OCI-LY7 (cell line): ENCODE measurements at regions of chr1 and their contacts with region 1.

Region 1: GRCh38 chr1:102434421-102434820 is 437.7 kb upstream of the OLFM3 start:
- DNase-seq: peak; percentile 58
- H3K4me3 ChIP-seq: no peak overlapping the region
- H3K27ac ChIP-seq: no peak overlapping the region
- H3K4me1 ChIP-seq: no peaks in the 10 kb centered on the region
- CTCF ChIP-seq: peak; percentile 77

Region 2: DNA sequence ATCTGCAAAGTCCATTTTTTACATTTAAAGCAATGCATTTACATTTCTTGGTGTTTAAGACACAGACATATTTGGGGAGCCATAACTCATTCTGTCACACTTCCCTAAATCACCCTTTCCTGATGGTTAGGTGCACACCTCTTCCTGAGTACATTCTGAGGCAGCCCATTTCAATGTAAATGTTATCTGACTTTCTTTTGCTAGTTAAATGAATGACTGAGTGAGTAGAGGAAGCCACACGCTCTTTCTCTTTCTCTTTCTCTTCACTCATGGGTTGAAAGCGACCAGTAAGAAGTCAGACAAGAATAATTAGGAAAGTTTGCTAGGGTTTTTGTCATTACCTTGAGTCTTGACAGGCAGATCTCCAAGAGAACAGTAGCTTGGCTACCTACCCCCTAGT is 1054.5 kb before region 1 on chr1:
- CTCF ChIA-PET with region 1: no interaction called
- POLR2A ChIA-PET with region 1: no interaction called
- intact Hi-C with region 1: no loop called
- DNase-seq: peak; percentile 4
- H3K4me3 ChIP-seq: no peak overlapping the region
- H3K27ac ChIP-seq: no peak overlapping the region
- H3K4me1 ChIP-seq: no peaks in the 10 kb centered on the region
- CTCF ChIP-seq: no peak

Region 3: DNA sequence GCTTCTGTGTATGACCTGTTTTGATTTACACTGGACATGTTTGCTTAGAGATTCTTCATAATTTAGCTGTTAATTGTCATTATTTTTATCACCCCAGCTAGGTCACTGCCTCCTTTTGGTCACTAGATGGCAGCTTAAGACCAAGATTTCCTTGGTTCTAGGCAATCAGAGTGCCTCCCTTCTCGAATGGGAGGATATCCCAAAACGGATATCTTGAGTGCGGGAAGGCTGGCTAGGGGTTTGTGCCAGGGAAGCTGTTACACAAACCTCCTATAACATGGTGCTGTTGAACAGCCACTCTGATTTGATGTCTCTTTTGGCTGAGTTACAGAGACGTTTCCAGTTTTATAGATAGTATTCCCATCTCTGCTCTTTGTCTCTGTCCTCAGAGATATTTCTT is 914.1 kb before region 1 on chr1:
- CTCF ChIA-PET with region 1: no interaction called
- POLR2A ChIA-PET with region 1: no interaction called
- intact Hi-C with region 1: loop called (anchors 5 kb)
- DNase-seq: peak; percentile 42
- H3K4me3 ChIP-seq: no peak overlapping the region
- H3K27ac ChIP-seq: no peak overlapping the region
- H3K4me1 ChIP-seq: no peaks in the 10 kb centered on the region
- CTCF ChIP-seq: peak; percentile 89

Region 4: GRCh38 chr1:101769520-101769919 is 664.9 kb before region 1 on chr1:
- CTCF ChIA-PET with region 1: no interaction called
- POLR2A ChIA-PET with region 1: no interaction called
- intact Hi-C with region 1: loop called (anchors 5 kb)
- DNase-seq: peak; percentile 36
- H3K4me3 ChIP-seq: no peak overlapping the region
- H3K27ac ChIP-seq: no peak overlapping the region
- H3K4me1 ChIP-seq: no peaks in the 10 kb centered on the region
- CTCF ChIP-seq: peak; percentile 75

Region 5: GRCh38 chr1:101875891-101876290 is 558.5 kb before region 1 on chr1:
- CTCF ChIA-PET with region 1: no interaction called
- POLR2A ChIA-PET with region 1: no interaction called
- intact Hi-C with region 1: no loop called
- DNase-seq: no peak
- H3K4me3 ChIP-seq: no peak overlapping the region
- H3K27ac ChIP-seq: no peak overlapping the region
- H3K4me1 ChIP-seq: no peaks in the 10 kb centered on the region
- CTCF ChIP-seq: no peak

Region 6: DNA sequence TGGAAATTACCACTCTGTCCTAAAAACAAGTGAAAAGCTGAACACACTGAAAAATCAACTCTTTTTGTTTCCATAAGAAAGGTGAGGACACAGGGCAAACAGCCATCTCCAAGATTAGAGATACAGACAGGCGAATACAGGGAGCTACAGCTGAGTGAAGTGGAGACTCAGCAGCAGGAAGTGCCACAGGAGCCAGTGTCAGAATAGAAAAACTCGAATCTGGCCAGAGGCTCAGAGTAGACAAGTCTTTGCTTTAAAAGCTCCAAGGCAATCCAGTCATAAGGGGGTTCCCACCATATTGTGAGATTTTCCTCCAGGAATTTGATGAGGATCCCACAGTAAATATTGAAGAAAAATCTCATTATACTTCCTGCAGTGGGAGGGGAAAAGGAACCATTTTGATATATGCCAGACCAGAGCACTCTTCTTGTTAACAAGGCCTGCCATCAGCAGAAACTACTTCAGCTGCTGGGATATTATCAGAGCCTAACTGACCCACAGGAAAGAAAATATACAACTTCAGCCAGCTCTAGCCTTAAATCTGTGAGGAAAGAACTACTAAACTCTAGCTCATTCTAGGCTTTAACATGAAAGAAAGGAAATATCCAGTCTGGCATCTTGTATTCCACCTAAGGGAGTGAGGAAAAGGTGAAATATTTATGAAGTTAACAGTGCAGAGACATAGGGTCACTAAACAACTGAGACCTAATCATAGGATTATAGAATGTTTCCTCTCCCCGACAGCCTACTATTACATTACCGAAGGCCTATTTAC is 181.5 kb before region 1 on chr1:
- CTCF ChIA-PET with region 1: no interaction called
- POLR2A ChIA-PET with region 1: no interaction called
- intact Hi-C with region 1: loop called (anchors 5 kb)
- DNase-seq: no peak
- H3K4me3 ChIP-seq: no peak overlapping the region
- H3K27ac ChIP-seq: no peak overlapping the region
- H3K4me1 ChIP-seq: no peaks in the 10 kb centered on the region
- CTCF ChIP-seq: no peak

Region 7: GRCh38 chr1:102472520-102472919 is 38.1 kb after region 1 on chr1:
- CTCF ChIA-PET with region 1: no interaction called
- POLR2A ChIA-PET with region 1: no interaction called
- intact Hi-C with region 1: no loop called
- DNase-seq: no peak
- H3K4me3 ChIP-seq: no peak overlapping the region
- H3K27ac ChIP-seq: no peak overlapping the region
- H3K4me1 ChIP-seq: no peaks in the 10 kb centered on the region
- CTCF ChIP-seq: no peak

Region 8: DNA sequence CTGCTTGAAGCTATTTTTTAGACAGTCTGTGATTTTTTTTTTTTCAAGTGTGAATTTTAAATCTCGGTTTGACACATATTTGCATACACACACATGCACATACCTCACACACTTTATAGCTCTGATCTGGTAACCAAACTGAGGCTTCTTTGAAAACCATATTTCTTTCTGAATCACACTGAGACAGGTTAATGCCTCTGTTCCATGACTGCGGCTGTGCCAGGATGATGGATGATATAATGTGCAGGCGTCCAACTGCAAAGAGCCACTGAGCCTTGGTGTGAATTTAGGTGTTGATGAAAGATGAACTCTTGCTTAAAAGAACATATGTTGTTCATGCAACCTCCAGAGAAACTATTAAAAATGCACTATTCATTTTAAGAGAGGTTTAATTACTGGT is 66.3 kb after region 1 on chr1:
- CTCF ChIA-PET with region 1: no interaction called
- POLR2A ChIA-PET with region 1: no interaction called
- intact Hi-C with region 1: no loop called
- DNase-seq: no peak
- H3K4me3 ChIP-seq: no peak overlapping the region
- H3K27ac ChIP-seq: no peak overlapping the region
- H3K4me1 ChIP-seq: no peaks in the 10 kb centered on the region
- CTCF ChIP-seq: no peak